ENCODE measurements at regions of chr6 and their contacts with region 1.

Region 1: GRCh38 chr6:31546962-31547726 is at the start of gene NFKBIL1:
- DNase-seq: peak; percentile 99
- H3K4me3 ChIP-seq: peak within 1 kb of the TSS; percentile 47
- H3K27ac ChIP-seq: peak within 1 kb of the TSS; percentile 71
- H3K4me1 ChIP-seq: peaks cover 11% of the 10 kb centered on the region
- H3K27me3 ChIP-seq: no peaks in the 10 kb centered on the region
- CTCF ChIP-seq: no peak
- total RNA-seq, gene NFKBIL1: 15.7 and 17.2 TPM in 2 replicates

Region 2: DNA sequence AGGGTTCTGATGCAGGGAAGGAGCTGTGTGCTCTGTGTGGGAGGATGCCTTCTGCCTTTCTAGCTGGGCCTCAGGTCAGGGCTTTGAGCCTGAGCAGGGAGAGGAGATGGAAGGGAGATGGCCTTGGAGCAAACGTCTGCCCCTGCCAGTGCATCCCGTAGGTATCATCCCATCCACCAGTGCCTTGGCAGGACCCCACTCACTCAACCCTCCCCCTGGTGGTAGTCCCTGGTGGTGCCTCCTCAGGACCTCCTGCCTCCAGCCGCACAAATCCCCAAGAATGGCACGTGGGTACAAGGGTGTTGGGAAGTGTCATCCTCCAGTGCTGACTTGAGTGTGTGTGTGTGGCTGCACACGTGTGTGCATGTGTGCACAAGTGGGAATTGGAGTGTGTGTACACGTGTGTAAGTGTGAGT is 72.3 kb before region 1 on chr6:
- CTCF ChIA-PET with region 1: no interaction called
- POLR2A ChIA-PET with region 1: interaction called, 15 read pairs
- intact Hi-C with region 1: no loop called
- DNase-seq: peak; percentile 34
- H3K4me3 ChIP-seq: no peak overlapping the region
- H3K27ac ChIP-seq: no peak overlapping the region
- H3K4me1 ChIP-seq: peaks cover 4% of the 10 kb centered on the region
- H3K27me3 ChIP-seq: no peaks in the 10 kb centered on the region
- CTCF ChIP-seq: peak; percentile 50; the same call in 1 of the 2 replicates

Region 3: DNA sequence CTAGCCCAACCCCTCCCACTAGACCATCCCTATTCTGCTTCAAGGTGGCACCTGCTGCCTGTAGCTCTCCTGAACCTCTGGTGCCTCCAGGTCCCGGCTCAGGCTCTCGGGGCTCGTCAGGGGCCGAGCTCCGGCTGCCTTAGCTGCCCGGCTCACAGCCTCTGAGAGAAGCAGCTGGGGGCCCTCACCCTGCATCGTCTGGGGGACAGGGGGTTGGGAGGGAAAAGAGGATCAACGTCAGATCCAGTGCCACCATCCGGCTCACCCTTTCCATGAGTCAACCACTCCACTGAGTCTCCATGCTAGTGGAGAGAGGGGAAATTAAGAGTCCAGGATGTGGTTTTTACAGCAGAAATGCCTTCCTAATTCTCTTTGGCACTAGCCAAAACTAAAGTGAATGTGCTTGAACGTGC is 92.3 kb after region 1 on chr6:
- CTCF ChIA-PET with region 1: no interaction called
- POLR2A ChIA-PET with region 1: no interaction called
- intact Hi-C with region 1: no loop called
- DNase-seq: no peak
- H3K4me3 ChIP-seq: no peak overlapping the region
- H3K27ac ChIP-seq: no peak overlapping the region
- H3K4me1 ChIP-seq: no peaks in the 10 kb centered on the region
- H3K27me3 ChIP-seq: no peaks in the 10 kb centered on the region
- CTCF ChIP-seq: no peak

Measured in A673 (cell line).